ENCODE measurements at regions of chr16 and their contacts with region 1.

Region 1: GRCh38 chr16:8989099-8989878 is 25.6 kb upstream of the USP7 start:
- DNase-seq: no peak
- ATAC-seq: no peak

Region 2: GRCh38 chr16:8899709-8900317 is 89.5 kb before region 1 on chr16:
- intact Hi-C with region 1: no loop called
- DNase-seq: peak; percentile 15
- ATAC-seq: no peak

Region 3: GRCh38 chr16:10876799-10877341 is 1887.6 kb after region 1 on chr16 and contains the start of gene CIITA:
- intact Hi-C with region 1: loop called (anchors 10 kb)
- DNase-seq: peak; percentile 85
- ATAC-seq: peak; percentile 78
- total RNA-seq, gene CIITA: 51.9 TPM

Measured in sciatic nerve (tissue), 2 donors.